Astrocyte of the cerebellum (primary cell): ENCODE measurements at regions of chr16 and their contacts with region 1.

Region 1: GRCh38 chr16:24844101-24845030 is 1.4 kb upstream of the SLC5A11 start:
- DNase-seq: no peak
- H3K4me3 ChIP-seq: no peak overlapping the region
- CTCF ChIP-seq: no peak

Region 2: GRCh38 chr16:24909856-24910255 is 65.5 kb after region 1 on chr16:
- in situ Hi-C with region 1: loop called (anchors 5 kb)
- DNase-seq: no peak
- H3K4me3 ChIP-seq: no peak overlapping the region
- CTCF ChIP-seq: no peak

Region 3: DNA sequence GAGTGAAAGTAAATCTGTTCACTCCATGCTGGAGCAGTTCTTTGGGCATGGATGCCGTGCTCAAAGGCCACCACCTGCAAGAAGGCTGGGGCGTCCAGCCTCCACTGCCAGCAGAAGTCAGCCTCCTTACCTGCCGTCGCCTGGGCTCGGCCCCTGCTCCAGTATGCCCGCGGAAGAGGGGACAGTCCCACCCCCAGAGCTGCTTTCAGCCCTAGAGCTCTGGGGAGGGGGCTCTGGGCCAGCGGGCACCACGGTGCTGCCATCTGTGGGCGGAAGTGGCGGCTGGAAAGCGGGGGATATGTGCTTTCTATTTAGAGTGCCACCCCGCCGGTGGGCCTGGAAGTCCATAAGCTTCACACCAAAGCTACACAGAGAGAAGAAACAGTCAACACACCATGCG is 94.9 kb after region 1 on chr16:
- in situ Hi-C with region 1: loop called (anchors 5 kb)
- DNase-seq: no peak
- H3K4me3 ChIP-seq: no peak overlapping the region
- CTCF ChIP-seq: no peak